ENCODE measurements at regions of chr16 and their contacts with region 1.

Region 1: DNA sequence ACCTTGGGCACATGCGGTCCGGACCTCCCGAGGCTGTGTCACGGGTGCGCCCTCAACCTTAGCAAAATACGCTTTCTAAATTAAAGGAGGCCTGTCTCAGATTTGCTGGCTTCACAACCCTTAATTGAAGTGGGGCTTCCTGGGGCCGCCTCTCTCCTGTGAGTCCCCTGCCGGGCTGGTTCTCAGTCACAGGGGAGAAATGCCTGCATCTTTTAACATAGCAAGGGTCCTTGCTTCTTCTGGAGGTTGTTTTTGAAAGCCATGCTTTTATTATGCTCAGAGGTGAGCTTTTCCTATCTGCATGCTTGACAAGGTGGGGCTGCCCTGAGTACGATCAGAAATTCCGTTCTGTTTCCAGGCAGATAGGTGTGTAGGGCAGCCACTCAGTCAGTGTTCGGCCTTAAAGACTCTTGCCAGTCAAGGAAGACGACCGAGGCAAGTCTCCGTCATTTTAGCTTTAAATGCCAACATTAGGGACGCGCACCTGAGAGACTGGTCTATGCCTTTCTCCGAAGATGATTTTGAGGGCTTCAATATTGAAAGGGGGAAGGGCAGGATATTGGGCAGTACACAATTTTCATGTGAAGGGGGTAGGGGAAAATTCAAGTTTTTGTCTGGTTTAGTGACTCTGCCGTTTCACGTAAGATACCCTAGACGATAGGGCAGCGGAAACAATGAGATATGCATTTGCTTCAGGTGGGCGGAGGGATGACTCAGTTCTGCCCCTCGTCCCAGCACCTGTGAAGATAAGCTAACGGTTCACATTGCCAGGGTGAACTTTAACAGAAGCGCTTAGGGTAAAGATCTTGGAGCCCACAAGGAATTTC is 5.5 kb upstream of the SLC7A5 start:
- DNase-seq: peak in 1 of 2 donors; percentile 54
- ATAC-seq: no peak
- H3K4me3 ChIP-seq: no peak overlapping the region
- H3K4me3 Mint-ChIP-seq: no peak overlapping the region
- H3K27ac ChIP-seq: no peak overlapping the region
- H3K27ac Mint-ChIP-seq: no peak overlapping the region
- H3K4me1 ChIP-seq: peaks cover 5% of the 10 kb centered on the region
- H3K4me1 Mint-ChIP-seq: peaks cover 0 to 8% of the 10 kb centered on the region in 2 donors
- H3K27me3 ChIP-seq: no peaks in the 10 kb centered on the region
- H3K27me3 Mint-ChIP-seq: peaks cover 2 to 16% of the 10 kb centered on the region in 2 donors
- CTCF ChIP-seq: no peak

Region 2: GRCh38 chr16:87853411-87854052 is 21.3 kb before region 1 on chr16:
- intact Hi-C with region 1: loop called (anchors 1 kb)
- DNase-seq: peak; percentile 91 to 93
- ATAC-seq: peak; percentile 78 to 89 (median 79)
- H3K4me3 ChIP-seq: peak overlapping the region; percentile 13
- H3K4me3 Mint-ChIP-seq: peak overlapping the region; percentile 70
- H3K27ac ChIP-seq: peak overlapping the region; percentile 78
- H3K27ac Mint-ChIP-seq: peak overlapping the region; percentile 86 to 94
- H3K4me1 ChIP-seq: peaks cover 60% of the 10 kb centered on the region
- H3K4me1 Mint-ChIP-seq: peaks cover 16 to 38% of the 10 kb centered on the region in 2 donors
- H3K27me3 ChIP-seq: no peaks in the 10 kb centered on the region
- H3K27me3 Mint-ChIP-seq: no peaks in the 10 kb centered on the region
- CTCF ChIP-seq: no peak

Region 3: DNA sequence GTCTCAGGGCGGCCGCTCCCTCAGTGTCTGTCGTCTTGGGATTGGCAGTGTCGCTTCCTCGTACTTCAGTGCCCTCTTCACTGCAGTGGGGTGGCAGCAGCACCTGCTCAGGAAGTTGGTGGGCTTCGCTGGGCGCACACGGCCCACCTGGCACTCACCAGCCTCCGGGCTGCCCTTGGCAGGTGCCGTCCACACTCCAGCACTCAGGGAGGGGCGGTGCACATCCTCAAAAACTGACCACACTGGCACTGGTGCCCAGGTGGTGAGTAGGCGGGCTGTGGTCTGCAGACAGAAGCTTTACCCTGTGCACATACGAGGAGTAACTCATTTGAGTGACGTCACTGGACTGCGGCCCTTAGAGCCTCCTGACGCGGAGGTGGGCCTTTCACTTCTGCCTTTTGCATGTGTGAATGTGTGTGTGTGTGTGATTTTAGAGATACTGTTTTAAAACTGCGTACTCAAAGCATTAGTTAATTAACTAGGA is 171.0 kb after region 1 on chr16:
- intact Hi-C with region 1: no loop called
- DNase-seq: peak in 1 of 2 donors; percentile 14
- ATAC-seq: peak in 2 of 3 donors; percentile 38 to 62
- H3K4me3 ChIP-seq: no peak overlapping the region
- H3K4me3 Mint-ChIP-seq: no peak overlapping the region
- H3K27ac ChIP-seq: peak overlapping the region; percentile 83
- H3K27ac Mint-ChIP-seq: no peak overlapping the region
- H3K4me1 ChIP-seq: peaks cover 32% of the 10 kb centered on the region
- H3K4me1 Mint-ChIP-seq: peaks cover 13 to 15% of the 10 kb centered on the region in 2 donors
- H3K27me3 ChIP-seq: no peaks in the 10 kb centered on the region
- H3K27me3 Mint-ChIP-seq: no peaks in the 10 kb centered on the region
- CTCF ChIP-seq: no peak